CD8-positive, alpha-beta memory T cell (primary cell): ENCODE measurements at regions of chr5 and their contacts with region 1.

Region 1: DNA sequence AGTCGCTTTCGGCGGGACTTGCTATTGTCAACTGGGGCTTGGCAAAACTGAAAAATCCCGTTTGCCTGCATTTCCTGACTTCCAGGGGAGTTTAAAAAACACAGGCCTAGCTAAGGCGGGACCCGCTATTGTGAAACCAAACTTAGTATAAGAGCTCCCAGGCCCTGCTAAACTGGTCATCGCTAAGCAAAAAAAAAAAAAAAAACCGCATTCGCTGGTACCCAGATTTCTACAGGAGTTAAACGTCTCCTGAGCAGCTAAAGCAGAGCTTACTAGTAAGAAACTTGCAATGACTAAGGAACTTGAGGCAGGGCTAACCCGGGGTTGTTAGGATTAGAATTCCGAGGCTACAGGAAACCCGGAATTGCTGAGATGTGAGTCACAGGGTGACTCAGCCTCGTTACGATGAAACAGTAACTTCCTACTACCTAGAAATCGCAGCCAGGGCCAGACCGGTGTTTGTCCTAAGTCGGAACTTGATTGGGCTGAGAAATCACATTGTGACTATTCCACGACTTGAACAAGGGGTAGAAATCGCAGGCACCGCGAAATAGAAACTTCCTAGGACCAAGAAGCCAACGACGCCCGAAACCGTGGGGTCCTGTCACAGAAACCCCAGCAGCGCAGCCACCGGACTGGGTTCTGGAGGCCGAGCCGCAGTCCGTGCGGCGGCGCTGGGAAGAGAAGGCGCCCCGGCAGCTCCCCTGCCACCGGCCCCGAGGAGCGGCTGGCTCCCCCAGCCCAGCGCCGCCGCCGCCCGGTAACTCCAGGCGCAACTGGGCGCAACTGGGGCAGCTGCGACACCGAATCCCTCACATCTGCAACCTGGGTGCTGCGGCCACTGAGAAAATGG is 89.5 kb downstream of the ANXA2R start:
- DNase-seq: peak; percentile 43 to 81 (median 61)
- H3K4me3 ChIP-seq: peak overlapping the region; percentile 97
- H3K4me3 Mint-ChIP-seq: peak overlapping the region; percentile 91 to 98 (median 95)
- H3K27ac ChIP-seq: peak overlapping the region; percentile 98
- H3K27ac Mint-ChIP-seq: peak overlapping the region; percentile 99 to 100 (median 100)
- H3K4me1 ChIP-seq: peaks cover 27% of the 10 kb centered on the region
- H3K4me1 Mint-ChIP-seq: peaks cover 29 to 50% (median 39%) of the 10 kb centered on the region in 3 donors
- H3K27me3 ChIP-seq: no peaks in the 10 kb centered on the region
- H3K27me3 Mint-ChIP-seq: peaks cover 0 to 16% of the 10 kb centered on the region in 2 donors

Region 2: GRCh38 chr5:42858031-42858643 is 92.5 kb before region 1 on chr5:
- CTCF ChIA-PET with region 1: no interaction called
- POLR2A ChIA-PET with region 1: no interaction called
- DNase-seq: no peak
- H3K4me3 ChIP-seq: no peak overlapping the region
- H3K4me3 Mint-ChIP-seq: no peak overlapping the region
- H3K27ac ChIP-seq: no peak overlapping the region
- H3K27ac Mint-ChIP-seq: no peak overlapping the region
- H3K4me1 ChIP-seq: no peaks in the 10 kb centered on the region
- H3K4me1 Mint-ChIP-seq: no peaks in the 10 kb centered on the region
- H3K27me3 ChIP-seq: no peaks in the 10 kb centered on the region
- H3K27me3 Mint-ChIP-seq: peaks cover 15 to 28% of the 10 kb centered on the region in 2 donors

Region 3: GRCh38 chr5:42994246-42995151 is 43.8 kb after region 1 on chr5:
- CTCF ChIA-PET with region 1: interaction called, 113 read pairs
- POLR2A ChIA-PET with region 1: interaction called, 274 read pairs
- DNase-seq: peak; percentile 74 to 91 (median 84)
- H3K4me3 ChIP-seq: peak overlapping the region; percentile 97
- H3K4me3 Mint-ChIP-seq: peak overlapping the region; percentile 94 to 100 (median 99)
- H3K27ac ChIP-seq: peak overlapping the region; percentile 97
- H3K27ac Mint-ChIP-seq: peak overlapping the region; percentile 97 to 100 (median 100)
- H3K4me1 ChIP-seq: peaks cover 29% of the 10 kb centered on the region
- H3K4me1 Mint-ChIP-seq: peaks cover 31 to 35% (median 35%) of the 10 kb centered on the region in 3 donors
- H3K27me3 ChIP-seq: no peaks in the 10 kb centered on the region
- H3K27me3 Mint-ChIP-seq: peaks cover 0 to 13% of the 10 kb centered on the region in 2 donors

Region 4: GRCh38 chr5:43019614-43020293 is 69.1 kb after region 1 on chr5:
- CTCF ChIA-PET with region 1: interaction called, 69 read pairs
- POLR2A ChIA-PET with region 1: interaction called, 105 read pairs
- DNase-seq: peak; percentile 75 to 93 (median 87)
- H3K4me3 ChIP-seq: peak overlapping the region; percentile 87
- H3K4me3 Mint-ChIP-seq: peak overlapping the region; percentile 97 to 100 (median 99)
- H3K27ac ChIP-seq: peak overlapping the region; percentile 96
- H3K27ac Mint-ChIP-seq: peak overlapping the region; percentile 98 to 100 (median 100)
- H3K4me1 ChIP-seq: peaks cover 36% of the 10 kb centered on the region
- H3K4me1 Mint-ChIP-seq: peaks cover 40 to 56% (median 54%) of the 10 kb centered on the region in 3 donors
- H3K27me3 ChIP-seq: no peaks in the 10 kb centered on the region
- H3K27me3 Mint-ChIP-seq: peaks cover 0 to 8% of the 10 kb centered on the region in 2 donors

Region 5: DNA sequence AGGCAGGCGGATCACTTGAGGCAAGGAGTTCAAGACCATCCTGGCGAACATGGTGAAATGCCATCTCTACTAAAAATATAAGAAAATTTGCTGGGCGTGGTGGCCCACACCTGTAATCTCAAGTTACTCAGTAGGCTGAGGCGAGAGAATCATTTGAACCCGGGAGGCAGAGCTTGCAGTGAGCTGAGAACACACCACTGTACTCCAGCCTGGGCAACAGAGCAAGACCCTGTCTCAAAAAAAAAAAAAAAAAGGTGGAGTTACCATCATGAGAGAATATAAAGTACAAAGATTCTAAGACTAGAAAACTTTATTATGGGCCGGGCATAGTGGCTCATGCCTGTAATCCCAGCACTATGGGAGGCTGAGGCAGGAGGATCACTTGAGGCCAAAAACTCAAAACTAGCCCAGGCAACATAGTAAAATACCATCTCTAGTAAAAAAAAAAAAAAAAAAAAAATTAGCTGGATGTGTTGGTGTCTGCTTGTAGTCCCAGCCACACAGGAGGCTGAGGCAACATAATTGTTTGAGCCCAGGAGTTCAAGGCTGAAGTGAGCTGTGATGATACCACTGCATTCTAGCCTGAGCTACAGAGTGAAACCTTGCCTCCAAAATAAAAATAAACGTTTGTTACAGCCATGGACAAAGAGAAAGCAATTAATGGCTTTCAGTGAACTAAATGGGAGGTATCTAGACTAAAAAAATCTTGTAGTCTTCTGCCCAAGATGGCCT is 76.6 kb after region 1 on chr5:
- CTCF ChIA-PET with region 1: interaction called, 69 read pairs
- POLR2A ChIA-PET with region 1: interaction called, 10 read pairs
- DNase-seq: no peak
- H3K4me3 ChIP-seq: no peak overlapping the region
- H3K4me3 Mint-ChIP-seq: no peak overlapping the region
- H3K27ac ChIP-seq: no peak overlapping the region
- H3K27ac Mint-ChIP-seq: peak overlapping the region in 7 of 8 donors; percentile 7 to 66 (median 14)
- H3K4me1 ChIP-seq: peaks cover 5% of the 10 kb centered on the region
- H3K4me1 Mint-ChIP-seq: peaks cover 10 to 43% (median 18%) of the 10 kb centered on the region in 3 donors
- H3K27me3 ChIP-seq: no peaks in the 10 kb centered on the region
- H3K27me3 Mint-ChIP-seq: no peaks in the 10 kb centered on the region

Region 6: GRCh38 chr5:43066799-43067741 is 116.4 kb after region 1 on chr5:
- CTCF ChIA-PET with region 1: interaction called, 20 read pairs
- POLR2A ChIA-PET with region 1: interaction called, 25 read pairs
- DNase-seq: peak; percentile 75 to 92 (median 87)
- H3K4me3 ChIP-seq: peak overlapping the region; percentile 99
- H3K4me3 Mint-ChIP-seq: peak overlapping the region; percentile 91 to 99 (median 98)
- H3K27ac ChIP-seq: peak overlapping the region; percentile 99
- H3K27ac Mint-ChIP-seq: peak overlapping the region; percentile 96 to 100 (median 99)
- H3K4me1 ChIP-seq: peaks cover 31% of the 10 kb centered on the region
- H3K4me1 Mint-ChIP-seq: peaks cover 42 to 59% (median 52%) of the 10 kb centered on the region in 3 donors
- H3K27me3 ChIP-seq: no peaks in the 10 kb centered on the region
- H3K27me3 Mint-ChIP-seq: no peaks in the 10 kb centered on the region